A549 (cell line): ENCODE measurements at regions of chr16 and their contacts with region 1.

Region 1: GRCh38 chr16:30091474-30092372 is at the start of gene TBX6:
- DNase-seq: peak; percentile 90 to 91
- ATAC-seq: peak; percentile 80 to 93
- H3K4me3 ChIP-seq: peak within 1 kb of the TSS; percentile 59
- H3K27ac ChIP-seq: peak within 1 kb of the TSS; percentile 79 to 94
- H3K4me1 ChIP-seq: peaks cover 29% of the 10 kb centered on the region
- CTCF ChIP-seq: peak; percentile 49; the same call in 2 of the 3 replicates
- EP300 ChIP-seq: no peak
- POLR2A ChIP-seq: peak; percentile 53
- RAD21 ChIP-seq: peak; percentile 76 to 82
- polyA plus RNA-seq, gene TBX6: 0.11 and 0.14 TPM in 2 replicates

Region 2: DNA sequence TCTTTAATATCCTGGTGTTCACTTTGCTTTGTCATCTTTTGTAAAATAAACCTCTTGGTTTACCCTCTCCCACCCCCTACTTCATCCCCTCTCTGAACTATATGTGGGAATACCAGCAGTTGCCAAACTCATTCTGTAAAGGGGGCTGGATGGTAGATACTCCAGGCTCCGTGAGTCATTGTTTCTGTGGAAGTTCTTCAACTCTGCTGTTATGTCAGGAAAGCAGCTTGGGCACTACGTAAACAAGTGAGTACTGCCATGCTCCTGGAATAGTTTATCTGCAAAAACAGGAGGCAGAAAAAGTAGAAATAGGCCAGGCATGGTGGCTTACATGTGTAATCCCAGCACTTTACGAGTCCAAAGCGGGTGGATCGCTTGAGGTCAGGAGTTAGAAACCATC is 253.9 kb before region 1 on chr16:
- CTCF ChIA-PET with region 1: no interaction called
- POLR2A ChIA-PET with region 1: no interaction called
- DNase-seq: no peak
- ATAC-seq: no peak
- H3K4me3 ChIP-seq: no peak overlapping the region
- H3K27ac ChIP-seq: no peak overlapping the region
- H3K4me1 ChIP-seq: peaks cover 16% of the 10 kb centered on the region
- CTCF ChIP-seq: no peak
- EP300 ChIP-seq: no peak
- POLR2A ChIP-seq: no peak
- RAD21 ChIP-seq: no peak

Region 3: GRCh38 chr16:29961479-29962343 is 130.0 kb before region 1 on chr16 and contains the start of gene TMEM219:
- CTCF ChIA-PET with region 1: no interaction called
- POLR2A ChIA-PET with region 1: no interaction called
- DNase-seq: peak; percentile 88 to 94
- ATAC-seq: peak; percentile 96 to 97
- H3K4me3 ChIP-seq: peak within 1 kb of the TSS; percentile 74
- H3K27ac ChIP-seq: peak within 1 kb of the TSS; percentile 86 to 96
- H3K4me1 ChIP-seq: peaks cover 12% of the 10 kb centered on the region; the same call in 1 of the 3 replicates
- CTCF ChIP-seq: no peak; the same call in 1 of the 3 replicates
- EP300 ChIP-seq: no peak
- POLR2A ChIP-seq: peak; percentile 53
- RAD21 ChIP-seq: peak in 1 of 2 experiments; percentile 47; a peak in 4 of 5 replicates
- polyA plus RNA-seq, gene TMEM219: 65.1 and 82.5 TPM in 2 replicates

Region 4: DNA sequence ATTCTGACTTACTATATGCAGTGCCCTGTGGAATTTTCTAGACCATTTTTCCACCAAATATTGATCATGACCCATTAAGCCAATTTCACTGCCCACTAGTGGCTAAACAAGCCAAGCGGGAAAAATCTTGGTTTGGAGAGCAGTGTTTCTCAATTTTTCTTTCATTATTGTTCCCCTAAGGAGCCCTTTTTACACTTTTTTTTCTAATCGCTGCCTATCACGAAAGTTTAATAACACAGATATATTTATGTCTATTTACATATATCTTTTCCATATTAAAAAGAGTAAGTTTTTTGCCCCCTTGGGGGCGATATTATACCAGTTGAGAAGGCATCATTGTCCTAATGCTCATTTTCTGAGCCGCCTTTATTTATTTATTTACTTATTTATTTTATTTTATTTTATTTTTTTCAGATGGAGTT is 49.9 kb before region 1 on chr16:
- CTCF ChIA-PET with region 1: interaction called, 13 read pairs
- POLR2A ChIA-PET with region 1: no interaction called
- DNase-seq: no peak
- ATAC-seq: 0 out of 6 replicates have a peak, but pooled peaks of 1 of the 2 experiments have one; percentile 41
- H3K4me3 ChIP-seq: no peak overlapping the region
- H3K27ac ChIP-seq: no peak overlapping the region
- H3K4me1 ChIP-seq: no peaks in the 10 kb centered on the region
- CTCF ChIP-seq: peak; percentile 72
- EP300 ChIP-seq: no peak
- POLR2A ChIP-seq: no peak
- RAD21 ChIP-seq: peak; percentile 61 to 75

Region 5: DNA sequence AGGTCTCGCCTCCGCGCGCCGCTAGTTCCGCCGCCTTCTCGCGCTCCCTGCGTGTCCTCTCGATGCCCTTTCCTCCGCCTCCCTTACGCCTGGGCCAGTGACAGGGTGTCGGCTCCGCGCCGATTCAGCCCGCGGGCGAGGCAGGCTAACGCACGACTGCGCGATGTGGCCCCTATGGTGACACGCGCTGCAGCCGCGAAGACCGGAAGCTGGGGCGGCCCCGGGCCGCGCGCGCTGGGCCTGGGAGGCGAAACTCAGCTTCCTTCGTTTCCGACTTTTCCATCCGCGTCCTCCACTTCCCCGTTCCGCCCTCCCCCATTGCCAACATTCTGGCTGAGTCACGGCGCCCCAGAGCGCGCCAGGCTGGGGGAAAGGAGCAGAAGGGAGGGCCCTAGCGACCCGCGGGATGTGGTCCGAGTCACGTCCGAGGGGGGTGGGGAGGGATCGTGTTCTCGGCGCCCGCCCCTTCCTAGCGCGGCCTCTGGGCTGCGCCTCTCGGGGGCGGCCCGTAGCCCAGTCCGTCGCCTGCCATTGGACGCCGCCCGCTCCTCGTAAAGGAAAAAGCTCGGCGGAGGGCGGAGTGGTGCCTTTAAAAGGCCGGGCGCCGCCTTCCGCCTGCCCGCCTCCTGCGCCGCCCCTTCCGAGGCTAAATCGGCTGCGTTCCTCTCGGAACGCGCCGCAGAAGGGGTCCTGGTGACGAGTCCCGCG is 26.4 kb before region 1 on chr16 and contains the start of gene ALDOA:
- CTCF ChIA-PET with region 1: interaction called, 119 read pairs
- POLR2A ChIA-PET with region 1: interaction called, 67 read pairs
- DNase-seq: peak; percentile 86 to 98
- ATAC-seq: peak; percentile 78 to 89
- H3K4me3 ChIP-seq: peak within 1 kb of the TSS; percentile 73
- H3K27ac ChIP-seq: peak within 1 kb of the TSS; percentile 96 to 97
- H3K4me1 ChIP-seq: peaks cover 34% of the 10 kb centered on the region
- CTCF ChIP-seq: no peak
- EP300 ChIP-seq: 0 out of 5 replicates have a peak, but pooled peaks of 1 of the 2 experiments have one; percentile 13
- POLR2A ChIP-seq: peak; percentile 95
- RAD21 ChIP-seq: no peak
- polyA plus RNA-seq, gene ALDOA: 741 and 761 TPM in 2 replicates

Region 6: GRCh38 chr16:30104494-30104968 is 12.8 kb after region 1 on chr16:
- CTCF ChIA-PET with region 1: interaction called, 153 read pairs
- POLR2A ChIA-PET with region 1: no interaction called
- DNase-seq: no peak
- ATAC-seq: 0 out of 6 replicates have a peak, but pooled peaks of 1 of the 2 experiments have one; percentile 33
- H3K4me3 ChIP-seq: no peak overlapping the region
- H3K27ac ChIP-seq: no peak overlapping the region
- H3K4me1 ChIP-seq: no peaks in the 10 kb centered on the region
- CTCF ChIP-seq: no peak
- EP300 ChIP-seq: no peak
- POLR2A ChIP-seq: no peak
- RAD21 ChIP-seq: no peak

Region 7: DNA sequence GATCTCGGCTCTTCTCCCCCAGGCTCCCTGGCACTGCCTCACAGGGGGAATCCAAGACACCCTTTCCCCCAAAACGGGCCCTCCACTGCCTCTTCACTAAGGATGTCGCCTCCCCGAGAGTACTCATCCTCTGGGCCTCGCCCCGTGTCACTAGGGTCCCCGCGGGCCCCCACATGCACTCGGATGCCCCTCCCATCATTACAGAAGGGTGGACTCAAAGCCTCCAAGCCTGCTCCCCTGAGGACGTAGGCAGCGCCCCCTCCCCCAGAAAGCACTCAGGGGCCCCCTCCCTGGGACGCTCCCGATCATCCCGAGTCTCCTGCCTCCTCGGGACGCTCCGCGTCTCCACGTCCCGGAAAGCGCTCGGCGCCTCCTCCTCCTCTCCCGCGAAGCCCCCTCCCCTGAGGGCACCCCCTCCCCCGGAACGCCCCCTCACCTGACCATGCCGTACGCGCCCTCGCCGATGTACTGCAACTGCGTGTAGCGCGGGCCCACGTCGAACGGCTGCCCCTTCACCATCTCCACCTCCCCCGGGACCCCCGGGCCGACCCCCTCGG is 31.0 kb after region 1 on chr16:
- CTCF ChIA-PET with region 1: interaction called, 153 read pairs
- POLR2A ChIA-PET with region 1: no interaction called
- DNase-seq: no peak
- ATAC-seq: peak in 1 of 2 experiments; percentile 17; a peak in 3 of 6 replicates
- H3K4me3 ChIP-seq: peak overlapping the region; percentile 73
- H3K27ac ChIP-seq: peak overlapping the region; percentile 92 to 94
- H3K4me1 ChIP-seq: peaks cover 27% of the 10 kb centered on the region
- CTCF ChIP-seq: no peak
- EP300 ChIP-seq: no peak
- POLR2A ChIP-seq: no peak
- RAD21 ChIP-seq: no peak

Region 8: GRCh38 chr16:30166202-30166902 is 74.6 kb after region 1 on chr16:
- CTCF ChIA-PET with region 1: no interaction called
- POLR2A ChIA-PET with region 1: no interaction called
- DNase-seq: no peak
- ATAC-seq: no peak
- H3K4me3 ChIP-seq: no peak overlapping the region
- H3K27ac ChIP-seq: no peak overlapping the region
- H3K4me1 ChIP-seq: no peaks in the 10 kb centered on the region
- CTCF ChIP-seq: no peak
- EP300 ChIP-seq: no peak
- POLR2A ChIP-seq: no peak
- RAD21 ChIP-seq: no peak

Region 9: GRCh38 chr16:30180741-30181140 is 89.0 kb after region 1 on chr16:
- CTCF ChIA-PET with region 1: interaction called, 10 read pairs
- POLR2A ChIA-PET with region 1: interaction called, 3 read pairs
- DNase-seq: no peak
- ATAC-seq: no peak
- H3K4me3 ChIP-seq: no peak overlapping the region
- H3K27ac ChIP-seq: no peak overlapping the region
- H3K4me1 ChIP-seq: peaks cover 12% of the 10 kb centered on the region; the same call in 2 of the 3 replicates
- CTCF ChIP-seq: no peak
- EP300 ChIP-seq: no peak
- POLR2A ChIP-seq: no peak
- RAD21 ChIP-seq: no peak